CD14-positive monocyte (primary cell): ENCODE measurements at regions of chr11 and their contacts with region 1.

Region 1: GRCh38 chr11:65180877-65181568 is 705 bp upstream of the CAPN1 start:
- DNase-seq: peak; percentile 57 to 71 (median 61)
- H3K4me3 ChIP-seq: peak overlapping the region; percentile 66 to 98 (median 91)
- H3K4me3 Mint-ChIP-seq: peak overlapping the region; percentile 89 to 91
- H3K27ac ChIP-seq: peak overlapping the region in 1 of 2 donors; percentile 44
- H3K27ac Mint-ChIP-seq: peak overlapping the region in 4 of 7 donors; percentile 32 to 80 (median 50)
- H3K4me1 ChIP-seq: peaks cover 22 to 29% of the 10 kb centered on the region in 2 donors
- H3K4me1 Mint-ChIP-seq: peaks cover 36% of the 10 kb centered on the region
- H3K27me3 ChIP-seq: no peaks in the 10 kb centered on the region
- H3K27me3 Mint-ChIP-seq: no peaks in the 10 kb centered on the region
- CTCF ChIP-seq: peak; percentile 72

Region 2: GRCh38 chr11:65111744-65112414 is 69.1 kb before region 1 on chr11 and contains the start of gene TM7SF2:
- intact Hi-C with region 1: loop called in 1 of 2 experiments (anchors 5 kb)
- DNase-seq: peak; percentile 84 to 90 (median 86)
- H3K4me3 ChIP-seq: peak within 1 kb of the TSS; percentile 31 to 81 (median 40)
- H3K4me3 Mint-ChIP-seq: peak within 1 kb of the TSS; percentile 80 to 91
- H3K27ac ChIP-seq: peak within 1 kb of the TSS in 1 of 2 donors; percentile 12
- H3K27ac Mint-ChIP-seq: peak within 1 kb of the TSS in 6 of 7 donors; percentile 19 to 82 (median 71)
- H3K4me1 ChIP-seq: peaks cover 36 to 43% of the 10 kb centered on the region in 2 donors
- H3K4me1 Mint-ChIP-seq: peaks cover 43% of the 10 kb centered on the region
- H3K27me3 ChIP-seq: peaks cover 0 to 15% of the 10 kb centered on the region in 2 donors
- H3K27me3 Mint-ChIP-seq: peaks cover 13 to 22% (median 15%) of the 10 kb centered on the region in 3 donors
- CTCF ChIP-seq: no peak
- polyA plus RNA-seq, gene TM7SF2: 1.8 to 4.5 (median 1.8) TPM

Region 3: DNA sequence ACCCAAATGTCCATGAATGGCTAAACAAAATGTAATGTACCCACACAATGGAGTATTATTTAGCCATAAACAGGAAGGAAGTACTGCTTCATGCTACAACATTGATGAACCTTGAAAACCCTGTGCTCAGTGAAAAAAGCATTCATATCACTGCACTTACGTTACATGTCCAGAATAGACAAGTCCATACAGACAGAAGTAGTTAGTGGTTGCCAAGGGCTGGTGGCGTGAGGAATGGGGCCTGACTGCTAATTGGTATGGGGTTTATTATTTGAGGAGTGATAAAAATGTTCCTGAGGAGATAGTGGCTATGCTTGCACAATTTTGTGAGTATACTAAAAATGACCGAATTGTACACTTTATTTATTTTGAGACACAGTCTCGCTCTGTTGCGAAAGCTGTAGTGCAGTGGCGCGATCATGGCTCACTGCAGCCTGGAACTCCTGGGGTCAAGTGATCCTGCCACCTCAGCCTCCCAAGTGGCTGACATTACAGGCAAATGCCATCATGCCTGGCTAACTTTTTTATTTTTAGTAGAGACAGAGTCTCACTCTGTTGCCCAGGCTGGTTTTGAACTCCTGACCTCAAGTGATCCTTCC is 39.0 kb before region 1 on chr11:
- intact Hi-C with region 1: loop called (anchors 5 kb)
- DNase-seq: no peak
- H3K4me3 ChIP-seq: no peak overlapping the region
- H3K4me3 Mint-ChIP-seq: no peak overlapping the region
- H3K27ac ChIP-seq: no peak overlapping the region
- H3K27ac Mint-ChIP-seq: no peak overlapping the region
- H3K4me1 ChIP-seq: no peaks in the 10 kb centered on the region
- H3K4me1 Mint-ChIP-seq: peaks cover 11% of the 10 kb centered on the region
- H3K27me3 ChIP-seq: no peaks in the 10 kb centered on the region
- H3K27me3 Mint-ChIP-seq: peaks cover 0 to 4% (median 2%) of the 10 kb centered on the region in 3 donors
- CTCF ChIP-seq: no peak

Region 4: GRCh38 chr11:65150509-65151271 is 30.3 kb before region 1 on chr11:
- intact Hi-C with region 1: loop called in 1 of 2 experiments (anchors 5 kb)
- DNase-seq: peak; percentile 95 to 99 (median 99)
- H3K4me3 ChIP-seq: peak overlapping the region in 1 of 3 experiments; percentile 24
- H3K4me3 Mint-ChIP-seq: peak overlapping the region; percentile 64 to 81
- H3K27ac ChIP-seq: peak overlapping the region; percentile 70 to 77
- H3K27ac Mint-ChIP-seq: peak overlapping the region; percentile 87 to 98 (median 96)
- H3K4me1 ChIP-seq: peaks cover 43 to 48% of the 10 kb centered on the region in 2 donors
- H3K4me1 Mint-ChIP-seq: peaks cover 47% of the 10 kb centered on the region
- H3K27me3 ChIP-seq: no peaks in the 10 kb centered on the region
- H3K27me3 Mint-ChIP-seq: peaks cover 0 to 2% (median 0%) of the 10 kb centered on the region in 3 donors
- CTCF ChIP-seq: no peak